CD4-positive, alpha-beta memory T cell (primary cell): ENCODE measurements at regions of chr1 and their contacts with region 1.

Region 1: DNA sequence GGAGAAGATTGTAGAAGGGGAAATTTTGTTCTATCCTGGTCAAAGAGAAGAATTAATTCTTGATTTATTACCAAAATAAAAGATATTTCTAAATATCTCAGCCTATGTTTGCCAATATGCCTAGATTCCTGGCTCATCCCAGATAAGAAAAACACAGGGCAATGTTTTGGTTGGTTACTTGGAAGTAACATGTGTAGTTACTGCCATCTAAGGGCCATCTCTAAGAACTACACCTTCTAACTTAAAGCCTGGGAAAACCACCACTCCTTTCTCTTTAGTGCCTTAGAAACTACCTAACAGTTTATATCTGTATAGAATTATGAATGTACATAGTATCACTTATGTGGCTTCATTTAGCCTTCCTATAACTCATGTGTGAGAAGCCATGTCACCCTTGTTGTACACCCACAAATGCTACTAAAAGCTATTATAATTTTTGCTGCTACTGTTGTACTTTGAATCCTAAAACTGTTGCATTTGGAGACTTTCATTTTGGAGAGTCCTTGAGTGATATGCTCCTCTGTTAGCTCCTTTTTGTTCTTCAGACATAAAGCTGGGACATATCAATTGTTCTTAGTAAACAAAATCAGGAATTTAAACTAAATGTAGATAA is 4.5 kb downstream of the AIM2 start:
- DNase-seq: peak in 4 of 5 donors; percentile 43 to 54 (median 50)
- H3K4me3 ChIP-seq: no peak overlapping the region
- H3K4me3 Mint-ChIP-seq: peak overlapping the region in 1 of 8 donors; percentile 3
- H3K27ac ChIP-seq: no peak overlapping the region
- H3K27ac Mint-ChIP-seq: peak overlapping the region in 4 of 7 donors; percentile 10 to 72 (median 58)
- H3K4me1 ChIP-seq: peaks cover 60% of the 10 kb centered on the region
- H3K4me1 Mint-ChIP-seq: peaks cover 25 to 58% (median 39%) of the 10 kb centered on the region in 4 donors
- H3K27me3 ChIP-seq: no peaks in the 10 kb centered on the region
- H3K27me3 Mint-ChIP-seq: no peaks in the 10 kb centered on the region

Region 2: GRCh38 chr1:157992031-157992832 is 1079.8 kb before region 1 on chr1:
- CTCF ChIA-PET with region 1: no interaction called
- POLR2A ChIA-PET with region 1: no interaction called
- intact Hi-C with region 1: no loop called
- DNase-seq: peak in 3 of 5 donors; percentile 6 to 24 (median 13)
- H3K4me3 ChIP-seq: no peak overlapping the region
- H3K4me3 Mint-ChIP-seq: peak overlapping the region in 3 of 8 donors; percentile 1 to 80 (median 70)
- H3K27ac ChIP-seq: no peak overlapping the region
- H3K27ac Mint-ChIP-seq: no peak overlapping the region
- H3K4me1 ChIP-seq: no peaks in the 10 kb centered on the region
- H3K4me1 Mint-ChIP-seq: peaks cover 0 to 18% (median 6%) of the 10 kb centered on the region in 4 donors
- H3K27me3 ChIP-seq: peaks cover 10% of the 10 kb centered on the region
- H3K27me3 Mint-ChIP-seq: peaks cover 20 to 25% of the 10 kb centered on the region in 2 donors

Region 3: DNA sequence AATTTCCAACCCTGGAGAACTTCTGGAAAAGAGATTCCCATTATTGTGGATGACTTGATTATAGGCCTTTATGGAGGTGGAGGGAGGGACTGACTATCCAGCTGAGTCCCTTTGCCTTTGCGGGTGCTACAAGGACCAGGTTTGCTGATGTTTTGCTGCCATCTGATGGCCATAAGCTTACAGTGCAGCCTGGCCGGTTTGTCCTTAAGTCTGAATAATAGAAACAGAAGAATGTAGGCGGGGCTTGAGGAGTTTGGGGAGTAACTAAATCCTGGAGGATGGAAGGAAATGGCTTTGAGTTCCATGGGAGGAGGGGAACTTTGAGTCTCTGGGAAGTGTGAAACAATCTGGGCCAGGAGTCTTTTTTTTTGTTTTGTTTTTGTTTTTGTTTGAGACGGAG is 947.1 kb before region 1 on chr1:
- CTCF ChIA-PET with region 1: interaction called, 6 read pairs
- POLR2A ChIA-PET with region 1: no interaction called
- intact Hi-C with region 1: loop called (anchors 10 kb)
- DNase-seq: peak; percentile 44 to 65 (median 57)
- H3K4me3 ChIP-seq: no peak overlapping the region
- H3K4me3 Mint-ChIP-seq: no peak overlapping the region
- H3K27ac ChIP-seq: no peak overlapping the region
- H3K27ac Mint-ChIP-seq: no peak overlapping the region
- H3K4me1 ChIP-seq: no peaks in the 10 kb centered on the region
- H3K4me1 Mint-ChIP-seq: peaks cover 0 to 3% (median 1%) of the 10 kb centered on the region in 4 donors
- H3K27me3 ChIP-seq: peaks cover 4% of the 10 kb centered on the region
- H3K27me3 Mint-ChIP-seq: peaks cover 17 to 19% of the 10 kb centered on the region in 2 donors

Region 4: DNA sequence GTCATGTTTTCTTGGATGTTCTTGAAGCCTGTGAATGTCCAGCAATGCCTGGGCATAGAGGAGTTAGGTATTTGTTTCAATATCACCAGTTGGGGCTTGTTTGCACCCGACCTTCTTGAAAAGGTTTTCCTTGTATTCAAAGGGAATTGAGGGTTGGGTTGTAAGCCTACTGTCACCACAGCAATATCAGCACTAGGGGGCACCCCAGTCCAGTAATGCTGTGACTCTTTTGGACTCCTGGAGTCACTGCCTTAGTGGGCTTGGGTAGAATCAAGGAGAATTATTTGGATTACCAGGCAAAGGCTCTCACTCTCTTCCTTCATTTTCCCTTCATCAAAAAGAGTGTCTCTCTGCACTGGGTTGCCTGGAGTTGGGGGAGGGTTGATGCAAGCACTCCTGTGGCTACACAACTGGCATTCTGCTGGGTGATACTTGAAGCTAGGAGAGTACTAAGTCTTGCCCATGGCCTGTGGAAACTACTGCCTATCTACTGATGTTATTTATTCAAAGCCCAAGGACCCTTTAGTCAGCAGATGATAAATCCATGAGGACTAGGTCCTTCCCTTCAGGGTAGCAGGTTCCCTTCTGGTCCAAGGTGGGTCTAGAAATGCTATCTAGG is 565.6 kb before region 1 on chr1:
- CTCF ChIA-PET with region 1: interaction called, 12 read pairs
- POLR2A ChIA-PET with region 1: no interaction called
- intact Hi-C with region 1: no loop called
- DNase-seq: peak in 4 of 5 donors; percentile 18 to 35 (median 24)
- H3K4me3 ChIP-seq: no peak overlapping the region
- H3K4me3 Mint-ChIP-seq: no peak overlapping the region
- H3K27ac ChIP-seq: no peak overlapping the region
- H3K27ac Mint-ChIP-seq: no peak overlapping the region
- H3K4me1 ChIP-seq: no peaks in the 10 kb centered on the region
- H3K4me1 Mint-ChIP-seq: no peaks in the 10 kb centered on the region
- H3K27me3 ChIP-seq: no peaks in the 10 kb centered on the region
- H3K27me3 Mint-ChIP-seq: peaks cover 11 to 32% of the 10 kb centered on the region in 2 donors

Region 5: GRCh38 chr1:158998781-158999161 is 73.3 kb before region 1 on chr1:
- CTCF ChIA-PET with region 1: interaction called, 22 read pairs
- POLR2A ChIA-PET with region 1: interaction called, 3 read pairs
- intact Hi-C with region 1: loop called (anchors 2 kb)
- DNase-seq: peak; percentile 63 to 72 (median 71)
- H3K4me3 ChIP-seq: no peak overlapping the region
- H3K4me3 Mint-ChIP-seq: peak overlapping the region in 7 of 8 donors; percentile 64 to 89 (median 76)
- H3K27ac ChIP-seq: no peak overlapping the region
- H3K27ac Mint-ChIP-seq: peak overlapping the region in 5 of 7 donors; percentile 24 to 93 (median 93)
- H3K4me1 ChIP-seq: peaks cover 33% of the 10 kb centered on the region
- H3K4me1 Mint-ChIP-seq: peaks cover 32 to 42% (median 37%) of the 10 kb centered on the region in 4 donors
- H3K27me3 ChIP-seq: no peaks in the 10 kb centered on the region
- H3K27me3 Mint-ChIP-seq: no peaks in the 10 kb centered on the region

Region 6: GRCh38 chr1:159015440-159015909 is 56.6 kb before region 1 on chr1:
- CTCF ChIA-PET with region 1: interaction called, 18 read pairs
- POLR2A ChIA-PET with region 1: interaction called, 42 read pairs
- intact Hi-C with region 1: loop called (anchors 2 kb)
- DNase-seq: peak; percentile 53 to 89 (median 63)
- H3K4me3 ChIP-seq: peak overlapping the region in 1 of 2 donors; percentile 26
- H3K4me3 Mint-ChIP-seq: peak overlapping the region; percentile 71 to 95 (median 84)
- H3K27ac ChIP-seq: peak overlapping the region; percentile 47
- H3K27ac Mint-ChIP-seq: peak overlapping the region; percentile 83 to 94 (median 91)
- H3K4me1 ChIP-seq: peaks cover 67% of the 10 kb centered on the region
- H3K4me1 Mint-ChIP-seq: peaks cover 55 to 79% (median 63%) of the 10 kb centered on the region in 4 donors
- H3K27me3 ChIP-seq: no peaks in the 10 kb centered on the region
- H3K27me3 Mint-ChIP-seq: no peaks in the 10 kb centered on the region

Region 7: DNA sequence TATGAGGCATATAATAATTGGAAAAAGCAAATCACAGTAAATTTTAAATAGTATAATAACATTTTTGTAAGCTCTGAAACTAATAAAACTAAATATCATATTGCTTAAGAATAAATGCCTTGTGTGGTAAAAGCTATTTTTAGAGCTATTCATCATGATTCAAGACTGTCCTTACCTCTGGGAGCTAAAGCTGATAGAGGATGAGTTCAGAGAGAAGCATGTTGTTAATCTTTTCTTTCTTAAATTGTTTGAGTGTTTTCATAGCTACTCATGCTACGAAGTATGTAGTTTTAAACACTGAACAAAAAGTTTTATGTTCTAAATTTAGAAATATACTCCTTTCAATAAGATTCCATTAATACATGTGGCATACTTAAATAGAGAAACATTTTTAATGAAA is 31.9 kb before region 1 on chr1:
- CTCF ChIA-PET with region 1: interaction called, 4 read pairs
- POLR2A ChIA-PET with region 1: interaction called, 10 read pairs
- intact Hi-C with region 1: no loop called
- DNase-seq: no peak
- H3K4me3 ChIP-seq: no peak overlapping the region
- H3K4me3 Mint-ChIP-seq: peak overlapping the region in 1 of 8 donors; percentile 5
- H3K27ac ChIP-seq: no peak overlapping the region
- H3K27ac Mint-ChIP-seq: peak overlapping the region in 5 of 7 donors; percentile 3 to 72 (median 49)
- H3K4me1 ChIP-seq: peaks cover 23% of the 10 kb centered on the region
- H3K4me1 Mint-ChIP-seq: peaks cover 34 to 70% (median 49%) of the 10 kb centered on the region in 4 donors
- H3K27me3 ChIP-seq: no peaks in the 10 kb centered on the region
- H3K27me3 Mint-ChIP-seq: no peaks in the 10 kb centered on the region

Region 8: DNA sequence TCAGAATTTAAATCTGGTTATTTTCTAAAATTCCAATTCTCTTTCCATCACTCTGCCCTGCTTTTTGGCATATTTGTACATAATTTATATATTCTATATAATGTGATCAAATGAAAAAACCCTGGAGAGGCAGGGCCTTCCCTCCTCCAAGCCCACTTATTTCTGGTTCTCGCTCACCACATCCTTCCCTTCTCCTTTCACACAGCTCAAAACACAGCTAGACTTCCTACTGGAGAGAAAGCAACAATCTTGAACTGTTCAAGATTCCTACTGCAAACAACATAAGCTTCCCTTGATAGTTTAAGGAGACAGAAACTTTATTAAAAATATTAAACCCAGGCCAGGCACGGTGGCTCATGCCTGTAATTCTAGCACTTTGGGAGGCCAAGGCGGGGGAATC is 12.1 kb after region 1 on chr1:
- CTCF ChIA-PET with region 1: interaction called, 44 read pairs
- POLR2A ChIA-PET with region 1: interaction called, 3 read pairs
- intact Hi-C with region 1: loop called (anchors 1 kb)
- DNase-seq: no peak
- H3K4me3 ChIP-seq: no peak overlapping the region
- H3K4me3 Mint-ChIP-seq: no peak overlapping the region
- H3K27ac ChIP-seq: no peak overlapping the region
- H3K27ac Mint-ChIP-seq: no peak overlapping the region
- H3K4me1 ChIP-seq: no peaks in the 10 kb centered on the region
- H3K4me1 Mint-ChIP-seq: peaks cover 2 to 14% (median 7%) of the 10 kb centered on the region in 4 donors
- H3K27me3 ChIP-seq: no peaks in the 10 kb centered on the region
- H3K27me3 Mint-ChIP-seq: no peaks in the 10 kb centered on the region